K562 (cell line): ENCODE measurements at regions of chr19 and their contacts with region 1.

Region 1: DNA sequence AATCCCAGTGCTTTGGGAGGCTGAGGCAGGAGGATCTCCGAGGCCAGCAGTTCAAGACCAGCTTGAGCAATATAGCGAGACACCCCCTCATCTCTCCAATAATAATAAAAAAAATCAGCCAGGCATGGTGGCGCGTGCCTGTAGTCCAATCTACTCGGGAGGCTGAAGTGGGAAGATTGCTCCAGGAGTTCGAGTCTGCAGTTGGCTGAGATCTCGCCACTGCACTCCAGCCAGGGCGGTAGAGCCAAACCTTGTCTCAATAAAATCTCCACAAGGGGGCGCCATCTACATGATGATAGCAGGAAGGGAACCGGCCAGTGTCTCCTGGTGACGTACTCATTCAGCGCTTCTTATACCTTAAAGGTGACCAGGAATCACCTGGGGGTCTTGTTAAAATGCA is 13.6 kb upstream of the C5AR1 start:
- DNase-seq: peak; percentile 79 to 94 (median 80)
- ATAC-seq: peak; percentile 99
- H3K4me3 ChIP-seq: no peak overlapping the region
- H3K27ac ChIP-seq: no peak overlapping the region
- H3K4me1 ChIP-seq: peaks cover 0 to 5% of the 10 kb centered on the region in 2 experiments; a peak in 3 of 5 replicates
- H3K27me3 ChIP-seq: no peaks in the 10 kb centered on the region
- CTCF ChIP-seq: peak; percentile 82 to 96 (median 95)
- EP300 ChIP-seq: no peak
- POLR2A ChIP-seq: no peak
- RAD21 ChIP-seq: peak; percentile 84 to 94

Region 2: GRCh38 chr19:47391510-47392223 is 95.6 kb after region 1 on chr19:
- CTCF ChIA-PET with region 1: interaction called, 28 read pairs
- POLR2A ChIA-PET with region 1: interaction called, 3 read pairs
- in situ Hi-C with region 1: loop called (anchors 5 kb)
- intact Hi-C with region 1: loop called (anchors 1 kb)
- DNase-seq: peak; percentile 76 to 85 (median 83)
- ATAC-seq: peak; percentile 96
- H3K4me3 ChIP-seq: no peak overlapping the region
- H3K27ac ChIP-seq: no peak overlapping the region
- H3K4me1 ChIP-seq: no peaks in the 10 kb centered on the region; a peak in 1 of 5 replicates
- H3K27me3 ChIP-seq: peaks cover 8 to 13% of the 10 kb centered on the region in 2 experiments; a peak in 4 of 5 replicates
- CTCF ChIP-seq: peak; percentile 88 to 94 (median 93)
- EP300 ChIP-seq: no peak
- POLR2A ChIP-seq: no peak
- RAD21 ChIP-seq: peak; percentile 78 to 90

Region 3: GRCh38 chr19:47428177-47428894 is 132.3 kb after region 1 on chr19:
- CTCF ChIA-PET with region 1: interaction called, 4 read pairs
- POLR2A ChIA-PET with region 1: no interaction called
- in situ Hi-C with region 1: no loop called
- intact Hi-C with region 1: loop called (anchors 1 kb)
- DNase-seq: peak; percentile 96 to 98 (median 96)
- ATAC-seq: peak; percentile 96
- H3K4me3 ChIP-seq: peak overlapping the region; percentile 1; the same call in 1 of the 2 replicates
- H3K27ac ChIP-seq: no peak overlapping the region; the same call in 2 of the 3 replicates
- H3K4me1 ChIP-seq: peaks cover 11 to 38% of the 10 kb centered on the region in 2 experiments; a peak in 3 of 5 replicates
- H3K27me3 ChIP-seq: peaks cover 8 to 13% of the 10 kb centered on the region in 2 experiments; a peak in 4 of 5 replicates
- CTCF ChIP-seq: no peak
- EP300 ChIP-seq: no peak; the same call in 1 of the 2 replicates
- POLR2A ChIP-seq: no peak
- RAD21 ChIP-seq: no peak

Region 4: DNA sequence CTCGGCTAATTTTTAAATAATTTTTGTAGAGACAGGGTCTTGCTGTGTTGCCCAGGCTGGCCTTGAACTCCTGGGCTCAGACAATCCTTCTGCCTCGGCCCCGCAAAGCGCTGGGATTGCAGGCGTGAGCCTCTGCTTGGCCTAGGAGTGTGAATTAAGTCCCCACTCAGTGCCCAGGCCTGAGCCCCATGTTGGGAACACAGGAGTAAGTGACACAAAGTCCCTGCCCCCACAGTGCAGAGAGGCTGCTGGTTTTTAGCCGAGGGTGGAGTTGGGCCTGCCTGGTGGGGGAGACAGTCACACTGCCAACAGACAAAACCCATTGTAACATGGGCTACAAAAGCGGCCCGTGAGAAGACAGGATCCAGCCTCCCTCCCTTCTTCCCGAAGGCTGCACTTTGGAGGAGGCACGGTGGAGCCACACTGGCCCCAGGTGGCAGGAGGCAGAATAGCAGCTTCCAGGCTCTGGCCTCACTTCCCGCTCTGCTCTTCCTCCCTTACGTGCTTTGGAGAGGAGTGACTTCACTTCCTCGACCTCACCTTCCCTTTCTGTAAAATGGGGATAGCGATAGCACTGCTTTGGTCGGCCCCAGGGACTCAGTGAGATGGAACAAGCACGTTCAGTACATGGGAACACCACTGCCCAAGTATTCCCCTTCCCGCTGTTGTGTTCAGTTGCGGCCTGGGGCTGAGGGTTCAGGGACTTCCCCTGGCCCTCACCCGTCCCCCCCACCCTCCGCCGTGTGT is 402.0 kb after region 1 on chr19:
- CTCF ChIA-PET with region 1: no interaction called
- POLR2A ChIA-PET with region 1: no interaction called
- in situ Hi-C with region 1: no loop called
- intact Hi-C with region 1: loop called (anchors 10 kb)
- DNase-seq: peak; percentile 82 to 86 (median 83)
- ATAC-seq: peak; percentile 92
- H3K4me3 ChIP-seq: no peak overlapping the region
- H3K27ac ChIP-seq: no peak overlapping the region
- H3K4me1 ChIP-seq: peaks cover 0 to 29% of the 10 kb centered on the region in 2 experiments; a peak in 2 of 5 replicates
- H3K27me3 ChIP-seq: no peaks in the 10 kb centered on the region
- CTCF ChIP-seq: peak; percentile 93 to 99 (median 98)
- EP300 ChIP-seq: no peak
- POLR2A ChIP-seq: no peak
- RAD21 ChIP-seq: peak; percentile 95 to 98

Region 5: DNA sequence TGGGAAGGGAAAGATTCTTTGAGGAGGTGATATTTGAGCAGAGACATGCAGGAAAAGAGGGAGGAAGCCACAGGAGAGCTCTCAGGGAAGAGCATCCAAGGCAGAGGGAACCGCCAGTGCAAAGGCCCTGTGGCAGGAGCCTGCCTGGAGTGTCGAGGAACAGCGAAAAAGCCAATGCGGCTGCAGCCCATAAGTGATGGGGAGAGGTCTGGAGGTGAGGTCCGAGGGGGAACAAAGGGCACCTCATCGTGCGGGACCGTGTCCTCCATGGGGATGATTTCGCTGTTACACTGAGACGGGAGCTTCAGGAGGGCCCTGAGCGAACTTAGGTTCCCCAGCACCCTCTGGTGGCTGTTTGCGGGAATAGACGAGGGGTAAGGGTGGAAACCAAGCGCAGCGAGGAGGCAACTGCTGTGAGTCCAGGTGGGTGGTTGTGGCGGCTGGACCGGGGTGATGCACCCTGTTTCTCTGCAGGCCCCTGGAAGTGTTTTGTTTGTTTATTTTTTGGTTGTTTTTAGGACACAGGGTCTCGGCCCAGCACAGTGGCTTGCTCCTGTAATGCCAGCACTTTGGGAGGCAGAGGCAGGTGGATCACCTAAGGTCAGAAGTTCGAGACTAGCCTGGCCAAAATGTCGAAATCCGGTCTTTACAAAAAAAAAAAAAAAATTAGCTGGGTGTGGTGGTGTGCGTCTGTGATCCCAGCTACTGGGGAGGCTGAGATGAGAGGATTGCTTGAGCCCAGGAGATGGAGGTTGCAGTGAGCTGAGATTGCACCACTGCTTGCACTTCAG is 411.3 kb after region 1 on chr19:
- CTCF ChIA-PET with region 1: no interaction called
- POLR2A ChIA-PET with region 1: no interaction called
- in situ Hi-C with region 1: loop called (anchors 5 kb)
- intact Hi-C with region 1: no loop called
- DNase-seq: peak; percentile 72 to 89 (median 76)
- ATAC-seq: peak; percentile 99
- H3K4me3 ChIP-seq: no peak overlapping the region
- H3K27ac ChIP-seq: no peak overlapping the region
- H3K4me1 ChIP-seq: peaks cover 0 to 5% of the 10 kb centered on the region in 2 experiments; a peak in 2 of 5 replicates
- H3K27me3 ChIP-seq: no peaks in the 10 kb centered on the region
- CTCF ChIP-seq: peak; percentile 90 to 95 (median 92)
- EP300 ChIP-seq: no peak
- POLR2A ChIP-seq: no peak
- RAD21 ChIP-seq: peak; percentile 72 to 93